Ovary (tissue), 10 donors: ENCODE measurements at regions of chr17 and their contacts with region 1.

Region 1: GRCh38 chr17:8248751-8249607 is at the start of gene PFAS:
- DNase-seq: peak; percentile 94 to 98 (median 96)
- H3K4me3 ChIP-seq: peak within 1 kb of the TSS; percentile 68
- H3K27ac ChIP-seq: peak within 1 kb of the TSS; percentile 92 to 94
- H3K4me1 ChIP-seq: peaks cover 2% of the 10 kb centered on the region
- H3K27me3 ChIP-seq: no peaks in the 10 kb centered on the region
- CTCF ChIP-seq: peak in 1 of 3 donors; percentile 14
- EP300 ChIP-seq: peak; percentile 66
- POLR2A ChIP-seq: peak; percentile 61
- total RNA-seq, gene PFAS: 6.6 to 69.9 (median 35.3) TPM

Region 2: DNA sequence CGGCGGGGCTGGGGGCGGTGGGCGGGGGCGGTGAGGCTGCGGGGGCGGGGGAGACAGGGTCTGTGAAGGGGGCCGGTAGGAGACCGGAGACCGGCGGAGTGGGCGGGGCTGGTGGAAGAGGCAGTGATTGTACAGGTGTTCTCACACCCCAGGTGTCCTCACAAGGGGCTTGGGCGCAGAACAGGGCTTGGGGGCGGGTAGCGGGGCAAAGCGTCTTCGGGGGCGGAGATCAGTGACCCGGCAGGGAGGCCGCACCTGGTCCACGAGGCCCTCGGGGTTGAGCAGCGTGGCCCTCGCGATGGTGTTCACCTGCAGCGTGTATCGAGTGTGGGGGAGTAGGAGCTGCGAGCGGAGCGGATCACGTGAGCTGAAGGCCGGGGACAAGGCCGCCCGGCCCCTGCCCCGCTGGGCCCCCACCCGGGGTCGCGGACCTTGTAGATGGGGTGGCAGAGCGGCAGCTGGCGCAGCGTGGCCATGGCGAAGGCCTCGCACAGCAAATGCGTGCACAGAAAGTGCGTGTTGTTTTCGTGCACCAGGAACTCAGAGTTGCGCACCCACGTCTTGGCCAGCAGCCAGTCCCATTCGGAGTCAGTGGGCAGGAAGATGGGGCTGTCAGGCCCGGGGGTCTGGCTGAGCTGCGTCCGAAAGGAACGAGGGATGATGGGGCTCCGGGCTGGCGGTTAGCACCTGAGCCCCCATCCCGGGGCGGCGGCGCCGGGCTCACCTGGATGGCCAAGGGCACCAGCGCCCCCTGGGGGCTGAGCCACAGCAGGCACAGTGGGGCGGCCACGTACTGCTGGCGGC is 139.1 kb before region 1 on chr17:
- intact Hi-C with region 1: no loop called
- DNase-seq: peak; percentile 36 to 71 (median 56)
- H3K4me3 ChIP-seq: peak overlapping the region; percentile 5
- H3K27ac ChIP-seq: no peak overlapping the region
- H3K4me1 ChIP-seq: peaks cover 6% of the 10 kb centered on the region
- H3K27me3 ChIP-seq: no peaks in the 10 kb centered on the region
- CTCF ChIP-seq: peak; percentile 21 to 65 (median 48)
- EP300 ChIP-seq: no peak
- POLR2A ChIP-seq: no peak

Region 3: GRCh38 chr17:8222630-8223356 is 26.2 kb before region 1 on chr17:
- intact Hi-C with region 1: loop called in 1 of 4 experiments (anchors 2 kb)
- DNase-seq: peak; percentile 96 to 98 (median 97)
- H3K4me3 ChIP-seq: peak overlapping the region; percentile 69
- H3K27ac ChIP-seq: peak overlapping the region; percentile 96
- H3K4me1 ChIP-seq: peaks cover 6% of the 10 kb centered on the region
- H3K27me3 ChIP-seq: no peaks in the 10 kb centered on the region
- CTCF ChIP-seq: no peak
- EP300 ChIP-seq: no peak
- POLR2A ChIP-seq: peak; percentile 84

Region 4: GRCh38 chr17:8288336-8289102 is 39.5 kb after region 1 on chr17 and contains the start of gene RANGRF:
- intact Hi-C with region 1: loop called in 2 of 4 experiments (anchors 5 to 10 kb)
- DNase-seq: peak; percentile 89 to 94 (median 92)
- H3K4me3 ChIP-seq: peak within 1 kb of the TSS; percentile 77
- H3K27ac ChIP-seq: peak within 1 kb of the TSS; percentile 72 to 88
- H3K4me1 ChIP-seq: peaks cover 2% of the 10 kb centered on the region
- H3K27me3 ChIP-seq: no peaks in the 10 kb centered on the region
- CTCF ChIP-seq: no peak
- EP300 ChIP-seq: no peak
- POLR2A ChIP-seq: peak; percentile 63
- total RNA-seq, gene RANGRF: 14.5 to 37.8 (median 28.0) TPM

Region 5: DNA sequence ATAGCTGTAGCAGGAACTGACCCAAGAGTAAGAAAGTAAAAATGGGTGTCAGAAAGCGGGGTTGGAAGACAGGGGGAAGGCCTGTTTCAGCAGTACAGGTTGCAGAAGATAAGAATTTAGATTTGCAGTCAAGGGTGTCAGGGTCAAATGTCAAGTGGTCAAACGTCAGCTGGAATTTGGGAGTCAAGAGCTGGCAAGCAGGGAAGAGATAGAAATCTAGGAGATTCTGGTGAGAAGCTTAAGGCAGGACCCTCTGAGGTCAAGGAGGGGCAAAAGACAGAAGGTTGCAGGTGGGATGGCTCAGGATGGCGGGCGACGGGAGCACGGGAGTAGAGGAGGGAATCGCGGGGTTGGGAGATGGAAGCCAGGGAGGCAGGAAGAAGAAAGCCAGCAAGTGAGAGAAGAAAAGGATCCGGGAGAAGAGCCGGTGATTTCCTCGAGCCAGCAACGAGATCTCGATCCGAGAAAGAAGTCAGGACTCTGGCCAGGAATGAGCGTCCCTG is 45.9 kb after region 1 on chr17:
- intact Hi-C with region 1: loop called in 1 of 4 experiments (anchors 10 kb)
- DNase-seq: no peak
- H3K4me3 ChIP-seq: peak overlapping the region; percentile 74
- H3K27ac ChIP-seq: peak overlapping the region in 1 of 2 donors; percentile 43
- H3K4me1 ChIP-seq: no peaks in the 10 kb centered on the region
- H3K27me3 ChIP-seq: no peaks in the 10 kb centered on the region
- CTCF ChIP-seq: no peak
- EP300 ChIP-seq: no peak
- POLR2A ChIP-seq: no peak